Common myeloid progenitor, CD34-positive (primary cell): ENCODE measurements at regions of chr16 and their contacts with region 1.

Region 1: DNA sequence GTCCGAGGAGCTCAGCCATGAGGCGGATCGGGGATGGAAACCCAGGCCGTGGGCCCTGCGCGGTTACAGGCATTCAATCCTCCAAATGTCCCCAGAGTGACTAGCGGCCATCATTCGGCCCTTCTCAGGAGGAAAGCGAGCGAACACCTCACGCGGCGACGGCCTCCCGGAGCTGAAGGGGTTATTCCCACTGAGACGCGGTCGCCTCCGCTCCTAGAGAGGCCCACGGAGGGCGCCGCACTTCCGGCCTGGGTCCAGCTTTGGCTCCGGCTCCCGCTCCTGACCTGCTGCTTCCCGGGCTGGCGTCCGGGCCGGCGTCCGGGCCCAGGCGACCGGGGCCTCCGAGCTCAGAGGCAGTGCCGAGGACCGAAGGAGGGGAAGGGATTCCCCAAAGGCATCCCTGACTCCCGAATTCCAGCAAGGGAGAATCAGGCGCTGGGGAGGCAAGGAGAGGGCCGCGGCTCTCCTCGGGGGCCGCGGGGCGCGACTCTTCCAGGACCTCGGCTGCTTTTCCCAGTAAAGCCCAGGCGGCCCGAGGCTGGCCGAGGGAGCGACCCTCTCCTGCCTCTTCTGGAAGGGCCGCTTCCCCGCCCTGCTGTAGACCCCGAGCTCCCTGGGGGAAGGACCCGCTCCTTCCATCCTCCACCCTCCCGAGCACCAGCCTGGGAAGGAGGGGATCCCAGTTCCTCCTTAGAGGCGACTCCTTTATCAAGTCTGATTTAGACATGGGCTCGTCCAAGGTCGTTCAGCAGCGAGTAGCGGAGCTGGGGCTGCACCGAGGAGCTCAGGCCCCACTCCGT is 18.6 kb upstream of the ZNF629 start:
- DNase-seq: peak; percentile 60 to 75 (median 73)
- H3K4me3 ChIP-seq: peak overlapping the region; percentile 72 to 96 (median 88)
- H3K27ac ChIP-seq: peak overlapping the region; percentile 50 to 79
- H3K4me1 ChIP-seq: peaks cover 0 to 30% (median 19%) of the 10 kb centered on the region in 4 experiments
- H3K27me3 ChIP-seq: no peaks in the 10 kb centered on the region

Region 2: GRCh38 chr16:30724641-30725417 is 80.7 kb before region 1 on chr16:
- CTCF ChIA-PET with region 1: no interaction called
- POLR2A ChIA-PET with region 1: no interaction called
- DNase-seq: peak; percentile 17 to 42 (median 40)
- H3K4me3 ChIP-seq: no peak overlapping the region
- H3K27ac ChIP-seq: peak overlapping the region in 1 of 2 experiments; percentile 55
- H3K4me1 ChIP-seq: peaks cover 0 to 8% (median 4%) of the 10 kb centered on the region in 4 experiments
- H3K27me3 ChIP-seq: no peaks in the 10 kb centered on the region

Region 3: DNA sequence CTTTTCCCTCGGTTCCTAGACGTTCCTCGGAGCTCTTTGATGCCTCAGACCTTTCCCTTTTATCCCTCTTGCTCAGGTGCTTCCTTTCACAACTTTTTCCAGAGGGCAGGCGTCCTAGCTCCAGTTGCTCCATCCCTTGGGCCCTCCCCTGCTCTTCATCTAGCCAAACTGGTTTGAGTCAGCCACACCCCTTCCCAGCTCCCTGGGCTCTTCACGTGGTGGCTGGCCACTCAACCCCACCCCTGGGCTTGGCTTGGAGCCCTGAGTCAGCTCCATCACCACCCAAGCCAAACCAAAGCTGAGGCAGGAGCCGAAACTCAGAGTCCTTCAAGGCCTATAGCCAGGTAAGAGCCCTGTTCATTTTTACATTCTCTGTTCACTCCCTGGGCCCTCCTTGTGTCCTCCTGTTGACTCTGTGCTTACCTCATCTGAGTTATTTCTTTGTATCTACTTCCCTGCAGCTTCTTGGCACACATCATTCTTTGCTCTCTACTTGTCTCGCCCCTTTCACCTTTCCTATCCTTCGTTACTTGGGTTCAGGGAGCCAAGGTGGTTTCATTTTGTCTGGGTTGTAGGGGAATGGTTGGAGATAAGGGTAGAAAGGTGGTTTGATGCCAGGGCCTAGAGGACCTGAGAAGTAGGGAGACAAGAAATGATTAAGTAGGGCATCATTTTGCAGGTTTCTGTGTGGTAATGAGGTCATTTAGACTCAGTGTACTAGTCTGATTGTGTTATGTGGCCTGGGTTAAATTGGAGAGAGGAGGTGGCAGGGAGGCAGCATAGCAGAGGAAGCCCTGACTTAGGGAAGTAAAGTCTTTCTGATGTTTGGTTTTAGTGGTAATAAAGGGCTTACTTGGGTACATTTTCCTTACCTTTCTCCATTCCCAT is 65.0 kb before region 1 on chr16:
- CTCF ChIA-PET with region 1: no interaction called
- POLR2A ChIA-PET with region 1: no interaction called
- DNase-seq: no peak
- H3K4me3 ChIP-seq: no peak overlapping the region
- H3K27ac ChIP-seq: no peak overlapping the region
- H3K4me1 ChIP-seq: no peaks in the 10 kb centered on the region
- H3K27me3 ChIP-seq: no peaks in the 10 kb centered on the region

Region 4: DNA sequence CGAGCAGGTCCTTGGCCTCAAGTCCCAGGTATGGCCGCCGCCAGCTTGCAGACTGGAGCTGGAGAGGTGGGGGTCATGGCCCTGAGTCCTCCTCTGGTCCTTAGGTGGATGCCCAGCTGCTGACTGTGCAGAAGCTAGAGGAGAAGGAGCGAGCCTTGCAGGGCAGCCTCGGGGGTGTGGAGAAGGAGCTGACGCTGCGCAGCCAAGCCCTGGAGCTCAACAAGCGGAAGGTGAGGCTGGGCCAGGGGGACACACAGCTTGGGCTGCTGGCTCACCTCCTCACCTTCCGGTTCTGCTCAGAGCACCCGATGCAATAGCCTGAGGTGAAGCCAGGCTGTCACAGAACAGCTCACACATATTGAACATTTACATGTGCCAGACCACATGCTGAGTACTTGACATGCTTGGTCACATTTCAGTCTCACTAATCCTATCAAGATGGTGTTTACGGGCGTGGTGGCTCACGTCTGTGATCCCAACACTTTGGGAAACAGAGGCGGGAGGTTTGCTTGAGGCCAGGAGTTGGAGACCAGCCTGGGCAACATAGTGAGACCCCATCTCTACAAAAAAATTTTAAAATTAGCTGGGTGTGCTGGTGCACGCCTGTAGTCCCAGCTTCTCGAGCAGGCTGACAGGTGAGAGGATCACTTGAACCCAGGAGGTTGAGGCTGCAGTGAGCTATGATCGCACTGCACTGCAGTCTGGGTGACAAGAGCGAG is 36.0 kb before region 1 on chr16:
- CTCF ChIA-PET with region 1: no interaction called
- POLR2A ChIA-PET with region 1: no interaction called
- DNase-seq: no peak
- H3K4me3 ChIP-seq: no peak overlapping the region
- H3K27ac ChIP-seq: no peak overlapping the region
- H3K4me1 ChIP-seq: peaks cover 0 to under 1% (median 0%) of the 10 kb centered on the region in 4 experiments
- H3K27me3 ChIP-seq: no peaks in the 10 kb centered on the region

Region 5: GRCh38 chr16:30786936-30787612 is 18.5 kb before region 1 on chr16 and contains the start of gene ZNF629:
- CTCF ChIA-PET with region 1: interaction called, 27 read pairs
- POLR2A ChIA-PET with region 1: interaction called, 15 read pairs
- DNase-seq: peak; percentile 54 to 66 (median 62)
- H3K4me3 ChIP-seq: peak within 1 kb of the TSS; percentile 85 to 97 (median 92)
- H3K27ac ChIP-seq: peak within 1 kb of the TSS; percentile 46 to 78
- H3K4me1 ChIP-seq: peaks cover 0 to 19% (median 15%) of the 10 kb centered on the region in 4 experiments
- H3K27me3 ChIP-seq: no peaks in the 10 kb centered on the region

Region 6: GRCh38 chr16:30793508-30794069 is 12.0 kb before region 1 on chr16:
- CTCF ChIA-PET with region 1: interaction called, 27 read pairs
- POLR2A ChIA-PET with region 1: no interaction called
- DNase-seq: no peak
- H3K4me3 ChIP-seq: no peak overlapping the region
- H3K27ac ChIP-seq: no peak overlapping the region
- H3K4me1 ChIP-seq: no peaks in the 10 kb centered on the region
- H3K27me3 ChIP-seq: no peaks in the 10 kb centered on the region